ENCODE measurements at regions of chr19 and their contacts with region 1.

Region 1: GRCh38 chr19:15432629-15433518 is 14.1 kb upstream of the AKAP8L start:
- DNase-seq: peak; percentile 64
- ATAC-seq: peak; percentile 85
- H3K4me3 ChIP-seq: peak overlapping the region; percentile 76 to 78
- H3K27ac ChIP-seq: peak overlapping the region; percentile 77
- H3K4me1 ChIP-seq: peaks cover 18 to 25% of the 10 kb centered on the region in 2 experiments
- H3K27me3 ChIP-seq: no peaks in the 10 kb centered on the region
- CTCF ChIP-seq: no peak
- POLR2A ChIP-seq: no peak
- RAD21 ChIP-seq: no peak

Region 2: GRCh38 chr19:15418588-15419412 is 14.1 kb before region 1 on chr19 and contains the start of gene AKAP8L:
- CTCF ChIA-PET with region 1: interaction called, 6 read pairs
- POLR2A ChIA-PET with region 1: interaction called, 10 read pairs
- RAD21 ChIA-PET with region 1: interaction called in 1 of 2 experiments, 4 read pairs
- intact Hi-C with region 1: no loop called
- DNase-seq: peak; percentile 100
- ATAC-seq: peak; percentile 96
- H3K4me3 ChIP-seq: peak within 1 kb of the TSS; percentile 96 to 100
- H3K27ac ChIP-seq: peak within 1 kb of the TSS; percentile 89
- H3K4me1 ChIP-seq: peaks cover 15 to 16% of the 10 kb centered on the region in 2 experiments; a peak in 3 of 4 replicates
- H3K27me3 ChIP-seq: no peaks in the 10 kb centered on the region
- CTCF ChIP-seq: peak; percentile 69 to 78 (median 74)
- POLR2A ChIP-seq: peak; percentile 86
- RAD21 ChIP-seq: peak; percentile 71
- total RNA-seq, gene AKAP8L: 106 TPM

Region 3: GRCh38 chr19:15449620-15450527 is 17.0 kb after region 1 on chr19 and contains the start of gene WIZ:
- CTCF ChIA-PET with region 1: no interaction called
- POLR2A ChIA-PET with region 1: interaction called, 5 read pairs
- RAD21 ChIA-PET with region 1: no interaction called
- intact Hi-C with region 1: loop called (anchors 1 kb)
- DNase-seq: no peak
- ATAC-seq: peak; percentile 53
- H3K4me3 ChIP-seq: peak within 1 kb of the TSS; percentile 59 to 62
- H3K27ac ChIP-seq: peak within 1 kb of the TSS; percentile 55; the same call in 1 of the 2 replicates
- H3K4me1 ChIP-seq: peaks cover 15 to 38% of the 10 kb centered on the region in 2 experiments; a peak in 3 of 4 replicates
- H3K27me3 ChIP-seq: no peaks in the 10 kb centered on the region
- CTCF ChIP-seq: no peak
- POLR2A ChIP-seq: no peak
- RAD21 ChIP-seq: no peak
- total RNA-seq, gene WIZ: 28.4 TPM

Measured in HCT116 (cell line).